ENCODE measurements at regions of chr5 and their contacts with region 1.

Region 1: DNA sequence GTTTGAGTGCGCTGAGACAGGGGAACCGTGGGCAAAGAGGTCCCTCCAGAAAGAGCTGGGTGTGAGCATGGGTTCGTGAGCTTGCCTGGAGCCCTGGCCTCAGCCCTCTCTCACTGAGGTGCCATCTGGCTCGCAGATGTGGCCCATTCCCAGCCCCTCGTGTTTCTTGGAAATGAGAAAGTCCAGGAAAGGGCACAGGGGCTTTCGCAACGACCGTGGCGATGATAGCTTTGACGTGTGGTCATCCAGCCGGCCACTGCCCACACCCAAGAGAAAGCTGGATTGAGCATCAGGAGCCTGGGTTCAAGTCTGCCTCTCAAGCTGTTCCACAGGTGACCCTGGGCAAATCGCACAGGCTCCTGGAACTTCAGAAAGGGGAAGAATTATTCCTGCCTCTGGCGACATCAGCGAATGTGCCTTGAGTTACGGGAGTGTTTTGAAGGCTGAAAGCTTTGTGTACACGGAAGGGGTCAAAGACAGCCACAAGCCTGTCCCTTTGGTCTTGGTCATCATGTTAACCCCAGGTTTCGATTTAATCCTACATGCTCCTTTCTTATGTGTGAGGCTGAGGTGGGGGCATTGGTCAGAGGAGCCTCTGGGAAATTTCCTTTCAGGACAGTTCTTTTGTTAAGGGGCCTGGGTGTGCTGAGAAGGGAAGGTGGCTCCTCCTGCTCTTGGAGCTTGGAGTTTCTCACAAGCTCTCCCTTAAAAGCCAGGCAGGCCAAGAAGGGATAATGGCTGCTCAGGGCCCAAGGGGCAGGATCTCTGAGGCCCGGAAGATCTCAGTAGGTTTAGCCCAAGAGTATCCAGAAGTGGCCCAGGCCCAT is 41.7 kb upstream of the IL17B start:
- DNase-seq: no peak
- ATAC-seq: no peak
- H3K4me3 ChIP-seq: no peak overlapping the region
- H3K4me3 Mint-ChIP-seq: no peak overlapping the region
- H3K27ac ChIP-seq: no peak overlapping the region
- H3K27ac Mint-ChIP-seq: no peak overlapping the region
- H3K4me1 ChIP-seq: no peaks in the 10 kb centered on the region
- H3K4me1 Mint-ChIP-seq: no peaks in the 10 kb centered on the region
- H3K27me3 ChIP-seq: peaks cover 0 to 7% (median 1%) of the 10 kb centered on the region in 4 experiments
- H3K27me3 Mint-ChIP-seq: peaks cover 29% of the 10 kb centered on the region
- CTCF ChIP-seq: no peak

Region 2: GRCh38 chr5:149549461-149550267 is 128.9 kb after region 1 on chr5:
- CTCF ChIA-PET with region 1: no interaction called
- POLR2A ChIA-PET with region 1: no interaction called
- intact Hi-C with region 1: no loop called
- DNase-seq: peak; percentile 80
- ATAC-seq: peak; percentile 11
- H3K4me3 ChIP-seq: peak overlapping the region; percentile 93 to 99 (median 97)
- H3K4me3 Mint-ChIP-seq: peak overlapping the region; percentile 97
- H3K27ac ChIP-seq: peak overlapping the region; percentile 87 to 97
- H3K27ac Mint-ChIP-seq: peak overlapping the region; percentile 99
- H3K4me1 ChIP-seq: peaks cover 20 to 27% of the 10 kb centered on the region in 2 donors
- H3K4me1 Mint-ChIP-seq: peaks cover 37% of the 10 kb centered on the region
- H3K27me3 ChIP-seq: no peaks in the 10 kb centered on the region
- H3K27me3 Mint-ChIP-seq: no peaks in the 10 kb centered on the region
- CTCF ChIP-seq: no peak

Region 3: GRCh38 chr5:150689120-150689519 is 1268.4 kb after region 1 on chr5:
- CTCF ChIA-PET with region 1: no interaction called
- POLR2A ChIA-PET with region 1: interaction called, 10 read pairs
- intact Hi-C with region 1: no loop called
- DNase-seq: no peak
- ATAC-seq: no peak
- H3K4me3 ChIP-seq: no peak overlapping the region
- H3K4me3 Mint-ChIP-seq: no peak overlapping the region
- H3K27ac ChIP-seq: no peak overlapping the region
- H3K27ac Mint-ChIP-seq: no peak overlapping the region
- H3K4me1 ChIP-seq: no peaks in the 10 kb centered on the region
- H3K4me1 Mint-ChIP-seq: no peaks in the 10 kb centered on the region
- H3K27me3 ChIP-seq: no peaks in the 10 kb centered on the region
- H3K27me3 Mint-ChIP-seq: no peaks in the 10 kb centered on the region
- CTCF ChIP-seq: no peak